AG04449 (cell line): ENCODE measurements at regions of chr12 and their contacts with region 1.

Region 1: GRCh38 chr12:3299929-3300832 is 190.8 kb upstream of the PRMT8 start:
- DNase-seq: peak; percentile 70
- H3K4me3 ChIP-seq: peak overlapping the region; percentile 32
- CTCF ChIP-seq: peak; percentile 94

Region 2: DNA sequence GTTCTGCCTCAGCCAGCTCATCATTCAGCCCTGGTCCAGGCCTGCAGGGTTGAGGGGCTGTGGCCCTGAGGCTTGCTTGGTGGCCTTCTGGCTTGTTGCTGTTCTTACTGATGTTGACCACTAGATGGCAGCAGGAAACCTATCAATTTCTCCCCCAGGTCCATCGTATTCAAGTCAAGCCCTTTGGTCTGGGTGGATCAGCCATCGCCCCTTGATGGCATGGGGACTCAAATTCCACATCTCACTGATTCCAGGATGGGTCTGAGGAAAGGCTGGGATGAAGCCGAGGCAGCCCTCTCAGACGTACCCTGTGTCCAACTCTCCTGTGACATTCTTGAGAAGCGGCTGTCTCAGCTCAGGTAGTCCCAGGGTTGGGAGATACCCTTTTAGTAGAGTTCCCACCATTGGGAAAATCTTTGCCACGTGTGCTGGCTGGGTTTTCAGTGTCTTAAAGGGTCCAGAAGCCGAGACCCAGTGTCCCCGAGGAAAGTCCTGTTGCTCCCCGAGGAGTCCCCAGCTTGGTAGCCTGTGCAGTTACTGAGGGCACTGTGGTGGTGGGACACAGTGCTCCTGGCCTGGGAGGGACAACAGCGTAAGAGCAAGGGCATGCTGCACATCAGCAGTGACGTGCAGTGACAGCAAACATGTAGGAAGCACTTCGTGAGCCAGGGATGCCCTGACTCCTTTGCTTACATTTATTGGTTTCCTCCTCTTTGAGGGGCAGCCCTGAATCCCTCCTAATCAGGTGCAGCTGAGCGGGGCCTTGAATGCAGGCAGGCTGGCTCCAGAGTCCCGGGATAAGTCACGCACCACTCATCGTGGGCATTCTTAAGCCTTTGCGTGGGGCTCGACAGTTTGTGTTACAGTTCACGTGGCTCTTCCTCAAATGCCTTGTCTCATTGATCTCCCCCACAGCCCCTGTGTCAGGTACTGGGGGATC is 164.4 kb before region 1 on chr12:
- CTCF ChIA-PET with region 1: interaction called, 57 read pairs
- POLR2A ChIA-PET with region 1: no interaction called
- DNase-seq: no peak
- H3K4me3 ChIP-seq: no peak overlapping the region
- CTCF ChIP-seq: peak; percentile 75

Region 3: DNA sequence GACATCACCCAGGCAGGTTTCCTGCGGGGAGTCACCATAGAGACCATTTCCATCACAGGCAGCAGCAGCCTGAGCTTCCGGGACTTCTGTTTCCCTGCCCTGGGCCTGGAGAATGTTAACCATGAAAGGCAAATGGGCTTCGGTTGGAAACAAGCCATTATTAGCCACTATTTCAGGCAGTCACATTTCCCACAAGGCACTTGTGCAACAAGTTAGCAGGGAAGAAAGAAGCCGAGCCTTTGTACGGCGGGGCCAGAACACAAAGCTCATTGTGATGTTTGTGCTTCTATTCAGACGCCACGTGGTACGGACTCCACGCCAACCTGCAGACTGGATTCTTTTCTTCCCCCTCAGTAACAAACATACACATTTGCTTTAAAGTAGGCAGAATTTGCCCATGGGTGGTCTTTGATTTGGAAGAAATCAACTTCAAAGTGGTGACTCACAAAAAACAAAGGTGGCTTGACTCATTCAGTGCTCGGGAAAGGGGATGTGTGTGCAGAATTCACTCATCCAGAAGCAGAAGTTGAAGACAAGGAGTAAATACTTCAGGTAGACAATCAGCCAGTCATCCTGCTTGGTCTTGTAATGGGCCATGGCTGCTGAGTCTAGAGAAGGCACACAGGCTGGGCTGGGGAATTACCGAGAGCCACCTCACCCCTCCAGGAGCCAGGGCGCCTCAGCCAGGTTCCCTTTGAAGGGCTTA is 36.6 kb after region 1 on chr12:
- CTCF ChIA-PET with region 1: interaction called, 10 read pairs
- POLR2A ChIA-PET with region 1: no interaction called
- DNase-seq: no peak
- H3K4me3 ChIP-seq: no peak overlapping the region
- CTCF ChIP-seq: no peak

Region 4: DNA sequence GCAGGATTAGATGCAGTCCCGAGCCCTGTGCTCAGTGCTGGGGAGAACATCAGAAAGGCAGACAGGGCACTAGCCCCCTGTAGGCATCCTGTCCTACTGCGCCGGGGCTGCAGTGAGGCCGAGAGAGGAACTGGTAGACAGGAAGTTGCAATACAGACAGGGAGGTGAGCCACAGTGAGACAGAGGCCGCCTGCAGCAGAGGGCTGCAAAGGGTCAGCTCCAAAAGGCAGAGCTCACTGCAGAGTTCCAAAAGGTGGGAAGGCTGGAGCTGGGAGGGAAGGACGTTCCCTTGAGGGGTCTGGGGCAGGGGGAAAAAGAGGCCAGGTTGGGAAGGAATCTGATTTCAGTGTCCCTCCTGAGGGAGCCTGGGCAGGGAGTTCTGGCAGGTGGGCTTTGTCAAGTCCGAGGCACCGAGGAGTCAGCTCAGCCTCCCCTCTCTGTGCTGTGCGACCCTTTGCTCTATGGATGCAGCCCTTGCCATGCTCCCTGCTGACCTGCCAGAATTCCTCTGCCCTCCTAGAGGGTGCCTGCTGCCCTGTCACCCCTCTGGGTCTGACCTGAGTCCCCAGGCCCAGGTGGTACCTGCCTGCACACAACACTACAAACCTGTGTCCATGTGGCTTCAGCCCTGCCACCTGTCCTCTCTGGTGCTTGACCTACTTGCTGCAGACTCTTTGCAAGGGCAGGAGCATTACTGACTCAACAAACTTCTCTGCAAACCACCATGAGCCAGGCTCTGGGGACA is 254.4 kb after region 1 on chr12:
- CTCF ChIA-PET with region 1: no interaction called
- POLR2A ChIA-PET with region 1: no interaction called
- DNase-seq: no peak
- H3K4me3 ChIP-seq: no peak overlapping the region
- CTCF ChIP-seq: no peak

Region 5: DNA sequence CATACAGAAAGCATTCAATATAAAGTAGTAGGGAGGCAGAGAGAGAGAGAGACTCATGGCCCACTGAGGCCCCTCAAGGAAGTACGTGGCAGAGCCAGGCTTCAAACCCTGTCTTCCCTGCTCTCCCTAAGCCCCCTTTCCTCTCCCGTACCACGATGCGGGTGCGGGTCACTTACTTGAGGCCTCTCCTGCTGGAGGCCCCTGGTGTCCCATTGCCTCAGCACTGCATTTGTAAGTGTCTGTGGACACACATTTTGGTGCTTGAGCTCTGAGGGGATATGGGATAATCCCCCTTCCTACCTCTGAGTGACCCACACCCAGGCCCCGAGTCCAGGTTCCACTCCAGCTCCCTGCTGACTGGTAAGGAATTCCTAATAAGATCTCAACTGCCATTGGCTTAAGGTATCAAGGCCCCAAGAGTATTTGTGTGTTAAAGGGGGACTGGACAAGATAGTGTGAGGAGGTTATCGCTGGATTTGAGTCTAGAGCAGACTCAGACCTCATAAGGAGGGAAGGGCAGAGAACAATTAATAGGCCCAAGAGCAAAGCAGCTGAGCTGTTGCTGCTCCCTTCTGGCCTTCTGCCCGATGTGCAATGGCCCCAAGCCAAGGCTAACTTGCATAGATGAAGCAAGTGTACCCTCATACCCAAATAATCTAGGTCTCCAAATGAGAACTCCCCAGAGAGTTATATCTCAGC is 380.9 kb after region 1 on chr12:
- CTCF ChIA-PET with region 1: interaction called, 12 read pairs
- POLR2A ChIA-PET with region 1: no interaction called
- DNase-seq: no peak
- H3K4me3 ChIP-seq: no peak overlapping the region
- CTCF ChIP-seq: no peak

Region 6: DNA sequence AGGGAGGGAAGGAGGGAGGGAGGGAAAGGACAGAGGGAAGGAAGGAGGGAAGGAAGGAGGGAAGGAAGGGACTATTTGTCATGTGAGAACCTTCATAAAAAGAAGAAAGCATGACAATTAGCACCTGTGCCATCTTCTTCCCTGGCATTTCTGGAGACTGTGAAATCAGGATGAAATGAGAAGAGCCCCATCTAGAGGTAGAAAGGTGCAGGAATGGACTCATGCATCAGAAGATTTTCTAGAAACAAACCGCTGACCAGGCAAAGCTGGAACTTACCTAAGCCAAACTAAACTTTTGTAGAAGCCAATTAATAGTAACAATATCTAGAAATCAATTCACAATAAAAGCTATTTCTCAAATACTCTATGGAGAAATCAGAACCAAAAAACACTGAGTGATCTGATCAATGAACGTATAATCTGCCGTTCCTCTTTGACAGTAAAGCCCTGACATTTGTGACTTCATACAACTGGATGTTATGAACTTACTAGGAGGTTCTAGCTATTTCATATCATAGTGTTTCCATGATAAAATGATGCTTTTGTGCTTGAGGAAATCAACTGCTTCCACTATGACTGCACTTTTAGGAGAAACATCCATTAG is 477.1 kb after region 1 on chr12:
- CTCF ChIA-PET with region 1: interaction called, 189 read pairs
- POLR2A ChIA-PET with region 1: no interaction called
- DNase-seq: no peak
- H3K4me3 ChIP-seq: no peak overlapping the region
- CTCF ChIP-seq: peak; percentile 60

Region 7: DNA sequence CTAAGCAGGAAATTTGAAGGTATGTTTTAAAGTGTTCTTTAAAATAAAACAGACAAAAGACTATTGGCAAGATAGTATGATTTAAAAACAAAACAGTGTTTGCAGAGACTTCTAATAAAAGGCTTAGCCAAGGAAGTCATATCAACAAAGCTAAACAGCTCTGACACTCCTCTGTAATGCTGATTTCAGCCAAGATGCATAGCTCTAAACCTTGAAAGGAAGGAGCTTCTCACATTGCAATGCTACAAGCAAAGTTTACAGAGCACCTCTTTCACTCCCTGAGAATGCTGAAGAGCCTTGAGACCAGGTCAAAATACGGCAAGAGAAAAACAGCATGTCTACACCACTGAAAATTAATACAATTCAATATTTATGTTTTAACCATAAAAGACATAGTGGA is 521.3 kb after region 1 on chr12:
- CTCF ChIA-PET with region 1: interaction called, 10 read pairs
- POLR2A ChIA-PET with region 1: no interaction called
- DNase-seq: no peak
- H3K4me3 ChIP-seq: no peak overlapping the region
- CTCF ChIP-seq: no peak